Right ventricle myocardium inferior (tissue), 1 donor: ENCODE measurements at regions of chr3 and their contacts with region 1.

Region 1: DNA sequence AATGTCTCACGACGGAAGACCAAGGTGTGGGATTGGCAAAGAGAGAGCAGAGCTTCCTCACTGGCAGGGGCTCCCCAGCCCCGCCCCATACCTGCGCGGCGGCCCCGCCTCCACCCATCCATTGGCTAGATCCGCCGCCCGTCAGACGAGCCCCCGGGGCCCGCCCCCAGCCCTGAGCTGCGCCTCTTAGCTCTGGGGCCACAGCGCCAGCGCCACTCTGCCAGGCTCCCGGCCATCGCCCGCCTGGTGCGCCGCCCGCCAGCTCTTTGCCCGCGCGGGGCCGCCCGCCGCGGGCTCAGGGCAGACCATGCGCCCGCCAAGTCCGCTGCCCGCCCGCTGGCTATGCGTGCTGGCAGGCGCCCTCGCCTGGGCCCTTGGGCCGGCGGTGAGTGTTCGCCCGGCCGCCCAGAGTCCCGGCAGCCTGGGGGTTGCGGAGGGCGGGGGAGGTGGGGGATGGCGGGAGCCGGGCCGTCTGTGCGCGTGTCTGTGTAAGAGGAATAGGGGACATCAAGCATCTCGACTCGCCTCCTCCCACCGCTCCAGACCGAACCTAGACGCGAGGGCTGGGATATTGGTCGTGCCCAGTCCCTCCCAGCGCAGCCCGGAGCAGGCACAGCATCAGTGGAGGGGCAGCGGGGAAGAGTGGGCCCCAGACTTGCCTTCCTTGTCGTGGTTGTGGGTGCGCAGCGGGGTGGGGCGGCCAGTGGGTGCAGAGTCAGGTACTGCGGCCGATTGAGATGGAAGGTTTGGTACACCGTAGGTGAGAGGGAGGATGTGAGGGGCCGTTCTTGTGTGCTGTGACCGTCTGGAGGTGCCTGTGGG is at the start of gene VIPR1:
- DNase-seq: peak; percentile 81
- ATAC-seq: peak; percentile 88
- total RNA-seq, gene VIPR1: 2.1 TPM

Region 2: DNA sequence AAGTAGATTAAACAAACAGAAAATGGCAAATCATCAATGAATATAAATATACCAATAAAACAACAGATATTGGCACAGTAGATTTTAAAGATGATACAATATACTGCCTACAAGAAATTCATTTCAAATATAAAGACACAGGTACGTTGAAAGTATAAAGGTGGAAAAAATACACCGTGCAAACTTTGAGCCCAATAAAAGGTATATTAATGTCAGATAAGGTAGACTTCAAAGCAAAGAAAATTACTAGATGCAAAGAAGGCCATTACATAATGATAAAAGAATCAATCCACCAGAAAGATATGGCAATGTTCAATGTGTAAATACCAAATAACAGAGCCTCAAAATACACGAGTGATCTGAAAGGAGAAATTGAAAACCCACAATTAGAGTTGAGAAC is 34.5 kb before region 1 on chr3:
- intact Hi-C with region 1: no loop called
- DNase-seq: no peak
- ATAC-seq: no peak

Region 3: GRCh38 chr3:42539869-42540714 is 37.5 kb after region 1 on chr3:
- intact Hi-C with region 1: loop called (anchors 2 kb)
- DNase-seq: no peak
- ATAC-seq: peak; percentile 23

Region 4: GRCh38 chr3:42547401-42547945 is 44.8 kb after region 1 on chr3:
- intact Hi-C with region 1: loop called (anchors 2 kb)
- DNase-seq: peak; percentile 87
- ATAC-seq: peak; percentile 64

Region 5: DNA sequence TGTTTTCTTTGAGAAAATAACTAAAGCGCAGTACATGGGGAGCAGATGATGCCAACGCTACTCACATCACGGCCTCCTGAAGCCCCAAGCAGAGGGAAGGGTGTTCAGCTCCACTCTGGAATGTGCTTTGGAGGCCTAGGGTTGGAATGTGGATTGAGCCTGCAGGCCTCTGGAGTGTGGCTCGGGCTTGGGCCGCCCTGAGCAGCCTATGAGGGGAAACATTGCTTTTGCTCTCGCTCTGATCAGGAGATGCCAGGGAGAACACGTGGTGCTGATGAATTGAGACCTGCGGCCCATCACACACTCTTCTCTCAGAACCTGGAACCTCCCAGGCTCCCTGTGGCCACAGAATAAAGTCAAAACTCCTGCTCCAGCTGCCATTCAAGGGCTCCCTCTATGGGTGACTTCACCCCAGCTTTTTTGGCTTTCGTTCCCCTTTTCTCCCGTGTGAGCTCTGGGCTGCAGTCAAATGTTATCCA is 247.2 kb after region 1 on chr3:
- intact Hi-C with region 1: loop called (anchors 5 kb)
- DNase-seq: no peak
- ATAC-seq: peak; percentile 17